CD8-positive, alpha-beta T cell (primary cell): ENCODE measurements at regions of chr11 and their contacts with region 1.

Region 1: DNA sequence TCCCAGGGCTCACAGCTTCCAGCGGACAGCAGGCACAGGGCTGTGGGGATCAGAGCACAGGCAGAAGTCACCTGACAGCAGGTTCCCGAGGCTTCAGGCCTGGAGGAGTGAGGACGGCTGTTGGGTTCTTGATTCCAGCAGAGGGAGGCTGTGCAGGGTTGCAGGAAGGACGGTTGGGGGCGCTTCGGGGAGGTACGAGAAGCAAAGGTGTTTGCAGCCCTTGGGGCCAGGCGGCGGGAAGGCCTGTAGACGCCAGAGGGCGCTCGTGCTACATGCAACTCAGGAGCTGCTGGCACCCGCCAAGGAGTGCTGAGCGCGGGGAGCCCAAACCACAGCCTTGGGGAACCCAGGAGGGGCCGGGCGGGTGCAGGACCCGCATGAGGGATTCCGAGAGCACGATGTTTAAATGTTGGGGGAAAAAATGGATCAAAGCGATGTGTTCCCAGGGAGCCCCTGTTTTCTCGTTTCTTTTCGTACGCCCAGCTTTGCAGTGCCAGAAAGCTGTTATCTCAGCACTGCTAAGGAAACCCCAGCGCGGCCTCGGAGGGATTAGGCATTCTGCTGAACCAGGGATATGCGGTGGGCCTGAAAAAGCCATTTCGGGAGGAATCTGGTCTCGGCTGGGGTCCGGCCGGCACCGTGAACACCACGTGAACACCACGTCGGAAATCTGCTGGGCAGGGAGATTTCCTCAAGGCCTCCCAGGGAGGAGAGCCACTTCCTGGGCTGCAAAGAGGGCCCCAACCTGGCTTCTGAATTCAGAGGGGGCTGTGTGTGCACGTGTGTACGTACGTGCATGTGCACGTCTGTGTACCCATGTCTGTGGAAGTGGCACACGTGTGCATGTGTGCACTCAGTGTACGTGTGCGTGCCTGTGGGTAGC is 88.1 kb downstream of the KCNQ1 start:
- DNase-seq: peak; percentile 85 to 97 (median 92)
- ATAC-seq: peak; percentile 86
- H3K4me3 ChIP-seq: peak overlapping the region; percentile 18 to 28
- H3K4me3 Mint-ChIP-seq: peak overlapping the region; percentile 76
- H3K27ac ChIP-seq: no peak overlapping the region
- H3K27ac Mint-ChIP-seq: no peak overlapping the region
- H3K4me1 ChIP-seq: peaks cover 19% of the 10 kb centered on the region
- H3K4me1 Mint-ChIP-seq: peaks cover 20% of the 10 kb centered on the region
- H3K27me3 ChIP-seq: no peaks in the 10 kb centered on the region
- H3K27me3 Mint-ChIP-seq: no peaks in the 10 kb centered on the region
- CTCF ChIP-seq: peak; percentile 94

Region 2: GRCh38 chr11:2290351-2290841 is 242.5 kb before region 1 on chr11:
- CTCF ChIA-PET with region 1: no interaction called
- POLR2A ChIA-PET with region 1: no interaction called
- intact Hi-C with region 1: no loop called
- DNase-seq: peak in 1 of 9 experiments; percentile 37
- ATAC-seq: no peak
- H3K4me3 ChIP-seq: no peak overlapping the region
- H3K4me3 Mint-ChIP-seq: no peak overlapping the region
- H3K27ac ChIP-seq: no peak overlapping the region
- H3K27ac Mint-ChIP-seq: no peak overlapping the region
- H3K4me1 ChIP-seq: peaks cover 22% of the 10 kb centered on the region
- H3K4me1 Mint-ChIP-seq: peaks cover 37% of the 10 kb centered on the region
- H3K27me3 ChIP-seq: no peaks in the 10 kb centered on the region
- H3K27me3 Mint-ChIP-seq: no peaks in the 10 kb centered on the region
- CTCF ChIP-seq: no peak

Region 3: GRCh38 chr11:2400069-2400760 is 132.7 kb before region 1 on chr11 and contains the start of gene TSSC4:
- CTCF ChIA-PET with region 1: interaction called, 18 read pairs
- POLR2A ChIA-PET with region 1: no interaction called
- intact Hi-C with region 1: no loop called
- DNase-seq: peak; percentile 99 to 100 (median 99)
- ATAC-seq: peak; percentile 87
- H3K4me3 ChIP-seq: peak within 1 kb of the TSS; percentile 94 to 96
- H3K4me3 Mint-ChIP-seq: peak within 1 kb of the TSS; percentile 92
- H3K27ac ChIP-seq: peak within 1 kb of the TSS; percentile 96 to 99
- H3K27ac Mint-ChIP-seq: peak within 1 kb of the TSS; percentile 94
- H3K4me1 ChIP-seq: peaks cover 24% of the 10 kb centered on the region
- H3K4me1 Mint-ChIP-seq: peaks cover 19% of the 10 kb centered on the region
- H3K27me3 ChIP-seq: no peaks in the 10 kb centered on the region
- H3K27me3 Mint-ChIP-seq: no peaks in the 10 kb centered on the region
- CTCF ChIP-seq: peak; percentile 85
- total RNA-seq, gene TSSC4: 48.8 to 49.5 TPM

Region 4: GRCh38 chr11:2459796-2460531 is 73.0 kb before region 1 on chr11:
- CTCF ChIA-PET with region 1: interaction called, 41 read pairs
- POLR2A ChIA-PET with region 1: no interaction called
- intact Hi-C with region 1: no loop called
- DNase-seq: no peak
- ATAC-seq: no peak
- H3K4me3 ChIP-seq: no peak overlapping the region
- H3K4me3 Mint-ChIP-seq: no peak overlapping the region
- H3K27ac ChIP-seq: no peak overlapping the region
- H3K27ac Mint-ChIP-seq: no peak overlapping the region
- H3K4me1 ChIP-seq: peaks cover 49% of the 10 kb centered on the region
- H3K4me1 Mint-ChIP-seq: peaks cover 46% of the 10 kb centered on the region
- H3K27me3 ChIP-seq: no peaks in the 10 kb centered on the region
- H3K27me3 Mint-ChIP-seq: no peaks in the 10 kb centered on the region
- CTCF ChIP-seq: no peak

Region 5: GRCh38 chr11:2554338-2555207 is 21.6 kb after region 1 on chr11:
- CTCF ChIA-PET with region 1: interaction called, 13 read pairs
- POLR2A ChIA-PET with region 1: no interaction called
- intact Hi-C with region 1: no loop called
- DNase-seq: no peak
- ATAC-seq: no peak
- H3K4me3 ChIP-seq: no peak overlapping the region
- H3K4me3 Mint-ChIP-seq: no peak overlapping the region
- H3K27ac ChIP-seq: no peak overlapping the region
- H3K27ac Mint-ChIP-seq: no peak overlapping the region
- H3K4me1 ChIP-seq: peaks cover 11% of the 10 kb centered on the region
- H3K4me1 Mint-ChIP-seq: peaks cover 15% of the 10 kb centered on the region
- H3K27me3 ChIP-seq: no peaks in the 10 kb centered on the region
- H3K27me3 Mint-ChIP-seq: no peaks in the 10 kb centered on the region
- CTCF ChIP-seq: no peak

Region 6: GRCh38 chr11:2586087-2586792 is 53.3 kb after region 1 on chr11:
- CTCF ChIA-PET with region 1: no interaction called
- POLR2A ChIA-PET with region 1: no interaction called
- intact Hi-C with region 1: no loop called
- DNase-seq: peak in 4 of 9 experiments; percentile 1 to 6 (median 2)
- ATAC-seq: no peak
- H3K4me3 ChIP-seq: no peak overlapping the region
- H3K4me3 Mint-ChIP-seq: no peak overlapping the region
- H3K27ac ChIP-seq: no peak overlapping the region
- H3K27ac Mint-ChIP-seq: no peak overlapping the region
- H3K4me1 ChIP-seq: no peaks in the 10 kb centered on the region
- H3K4me1 Mint-ChIP-seq: no peaks in the 10 kb centered on the region
- H3K27me3 ChIP-seq: no peaks in the 10 kb centered on the region
- H3K27me3 Mint-ChIP-seq: no peaks in the 10 kb centered on the region
- CTCF ChIP-seq: no peak

Region 7: DNA sequence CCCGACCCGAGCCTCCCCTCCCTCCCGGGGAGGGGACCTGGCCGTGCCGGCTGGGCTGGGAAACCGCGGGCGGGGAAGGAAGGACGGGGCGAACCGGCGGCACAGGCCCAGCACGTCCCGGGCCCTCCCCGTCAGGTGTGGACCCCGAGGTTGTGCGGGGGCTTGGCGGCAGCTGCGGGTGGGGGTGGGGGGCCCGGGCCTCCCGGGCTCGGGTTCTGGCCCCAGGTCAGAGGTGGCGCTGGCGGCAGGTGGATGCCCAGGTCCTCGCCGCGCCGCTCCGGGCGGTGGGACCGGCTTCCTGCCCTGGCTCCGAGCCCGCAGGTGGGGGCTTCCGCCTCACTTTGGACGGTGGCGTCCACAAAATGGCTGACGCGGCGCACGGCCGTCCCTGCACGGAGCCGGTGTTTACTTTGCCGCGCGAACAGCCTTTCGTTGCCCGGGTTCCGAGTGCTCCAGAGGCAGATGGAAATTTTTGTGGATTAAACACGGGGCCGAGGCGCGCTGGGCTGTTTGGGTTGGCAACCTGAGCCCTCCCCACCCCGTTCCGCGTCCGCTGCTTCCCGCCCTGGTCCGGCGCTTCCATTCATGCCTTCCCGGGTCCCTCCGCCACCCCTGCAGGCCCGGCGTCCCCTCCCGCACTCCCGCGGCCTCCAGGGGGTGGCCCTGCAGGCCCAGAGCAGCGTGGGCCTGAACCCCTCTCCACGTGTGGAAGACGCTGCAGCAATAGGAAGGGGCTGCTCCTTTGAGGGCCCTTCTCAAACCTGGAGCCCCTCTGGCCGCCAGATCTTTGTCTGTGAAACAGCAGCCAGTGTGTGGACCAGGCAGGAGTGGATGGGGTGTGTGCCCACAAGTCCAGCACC is 258.8 kb after region 1 on chr11:
- CTCF ChIA-PET with region 1: no interaction called
- POLR2A ChIA-PET with region 1: no interaction called
- intact Hi-C with region 1: no loop called
- DNase-seq: peak in 7 of 9 experiments; percentile 22 to 72 (median 42)
- ATAC-seq: peak; percentile 81
- H3K4me3 ChIP-seq: peak overlapping the region; percentile 51 to 60
- H3K4me3 Mint-ChIP-seq: peak overlapping the region; percentile 78
- H3K27ac ChIP-seq: no peak overlapping the region
- H3K27ac Mint-ChIP-seq: peak overlapping the region; percentile 45
- H3K4me1 ChIP-seq: peaks cover 11% of the 10 kb centered on the region
- H3K4me1 Mint-ChIP-seq: peaks cover 4% of the 10 kb centered on the region
- H3K27me3 ChIP-seq: peaks cover 0 to 4% of the 10 kb centered on the region in 2 experiments
- H3K27me3 Mint-ChIP-seq: no peaks in the 10 kb centered on the region
- CTCF ChIP-seq: no peak

Region 8: DNA sequence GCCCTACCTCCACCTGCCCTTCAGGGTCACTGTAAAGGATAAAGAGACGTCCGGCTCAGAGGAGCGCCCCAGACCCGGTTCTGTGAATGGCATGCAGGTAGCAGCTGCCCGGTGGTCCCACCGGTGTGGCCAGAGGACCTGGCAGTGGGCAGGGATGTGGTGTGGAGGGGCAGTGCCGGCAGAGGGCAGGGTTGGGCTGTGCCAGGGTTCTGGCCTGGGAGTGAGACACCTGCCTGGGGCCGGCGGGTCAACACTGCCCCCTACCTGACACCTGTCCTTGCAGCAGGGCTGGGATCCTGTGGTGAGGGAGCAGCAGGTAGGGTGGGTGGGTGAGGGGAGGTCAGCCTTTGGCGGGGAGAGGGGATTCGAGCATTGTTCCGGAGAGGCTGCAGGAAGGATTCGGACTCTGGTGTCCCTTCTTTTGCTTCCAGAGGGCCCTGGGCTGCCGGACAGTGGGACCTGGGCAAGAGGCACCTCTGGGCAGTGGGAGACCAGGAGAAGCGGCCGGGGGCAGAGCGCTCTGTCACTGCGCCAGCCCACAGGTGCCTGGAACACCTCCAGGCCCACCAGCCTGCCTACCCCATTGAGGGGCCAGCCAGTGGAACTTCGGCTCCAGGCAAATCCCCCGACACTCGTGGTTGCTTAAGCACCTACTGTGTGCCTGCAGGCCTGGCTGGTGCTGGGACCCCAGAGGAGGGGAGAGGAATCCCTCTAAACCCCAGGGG is 397.9 kb after region 1 on chr11:
- CTCF ChIA-PET with region 1: interaction called, 34 read pairs
- POLR2A ChIA-PET with region 1: no interaction called
- intact Hi-C with region 1: loop called (anchors 1 kb)
- DNase-seq: peak in 5 of 9 experiments; percentile 38 to 59 (median 49)
- ATAC-seq: no peak
- H3K4me3 ChIP-seq: peak overlapping the region; percentile 37 to 62
- H3K4me3 Mint-ChIP-seq: peak overlapping the region; percentile 80
- H3K27ac ChIP-seq: no peak overlapping the region
- H3K27ac Mint-ChIP-seq: no peak overlapping the region
- H3K4me1 ChIP-seq: peaks cover 36% of the 10 kb centered on the region
- H3K4me1 Mint-ChIP-seq: peaks cover 22% of the 10 kb centered on the region
- H3K27me3 ChIP-seq: peaks cover 12 to 17% of the 10 kb centered on the region in 2 experiments
- H3K27me3 Mint-ChIP-seq: peaks cover 24% of the 10 kb centered on the region
- CTCF ChIP-seq: no peak

Region 9: DNA sequence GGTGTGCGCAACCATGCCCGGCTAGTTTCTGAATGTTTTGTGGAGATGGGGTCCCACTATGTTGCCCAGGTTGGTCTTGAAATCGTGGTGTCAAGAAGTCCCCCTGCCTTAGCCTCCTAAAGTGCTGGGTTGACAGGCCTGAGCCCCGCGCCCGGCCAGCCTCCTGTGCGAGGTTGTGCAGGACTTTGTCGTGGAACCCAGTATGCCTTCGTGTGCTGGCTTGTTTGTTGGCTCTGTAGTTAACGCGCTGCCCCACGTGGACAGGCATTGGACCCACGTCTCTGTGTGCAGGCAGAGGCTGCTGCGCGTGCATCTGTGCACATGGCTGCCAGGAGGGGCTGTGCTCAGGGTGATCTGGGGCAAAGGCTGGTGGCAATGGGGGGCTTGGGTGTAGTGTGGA is 879.9 kb after region 1 on chr11:
- CTCF ChIA-PET with region 1: interaction called, 3 read pairs
- POLR2A ChIA-PET with region 1: no interaction called
- intact Hi-C with region 1: loop called in 1 of 2 experiments (anchors 2 kb)
- DNase-seq: no peak
- ATAC-seq: no peak
- H3K4me3 ChIP-seq: no peak overlapping the region
- H3K4me3 Mint-ChIP-seq: no peak overlapping the region
- H3K27ac ChIP-seq: no peak overlapping the region
- H3K27ac Mint-ChIP-seq: no peak overlapping the region
- H3K4me1 ChIP-seq: no peaks in the 10 kb centered on the region
- H3K4me1 Mint-ChIP-seq: peaks cover 7% of the 10 kb centered on the region
- H3K27me3 ChIP-seq: no peaks in the 10 kb centered on the region
- H3K27me3 Mint-ChIP-seq: peaks cover 2% of the 10 kb centered on the region
- CTCF ChIP-seq: no peak